ENCODE measurements at regions of chr12 and their contacts with region 1.

Region 1: DNA sequence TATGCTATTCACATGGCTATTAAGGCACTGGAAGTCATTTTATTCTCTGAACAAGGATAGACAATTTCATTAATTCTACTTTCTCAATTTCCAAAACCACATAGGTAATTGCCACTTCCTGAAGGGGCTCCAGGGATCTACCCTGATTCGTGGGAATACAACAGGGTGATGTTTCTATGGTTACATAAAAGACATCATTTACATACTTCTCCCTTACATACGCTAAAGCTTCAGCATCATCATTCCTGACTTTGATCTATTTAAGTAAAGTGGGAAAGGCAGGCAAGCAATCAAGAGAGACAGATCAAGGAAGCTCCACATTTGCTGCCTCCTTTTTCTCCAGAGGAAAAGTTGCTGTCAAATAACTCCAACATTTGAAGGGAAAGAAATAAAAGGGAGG is 118.8 kb upstream of the SINHCAF start:
- DNase-seq: no peak
- H3K4me3 ChIP-seq: no peak overlapping the region
- H3K27ac ChIP-seq: no peak overlapping the region
- H3K4me1 ChIP-seq: no peaks in the 10 kb centered on the region
- H3K27me3 ChIP-seq: no peaks in the 10 kb centered on the region
- CTCF ChIP-seq: no peak

Region 2: DNA sequence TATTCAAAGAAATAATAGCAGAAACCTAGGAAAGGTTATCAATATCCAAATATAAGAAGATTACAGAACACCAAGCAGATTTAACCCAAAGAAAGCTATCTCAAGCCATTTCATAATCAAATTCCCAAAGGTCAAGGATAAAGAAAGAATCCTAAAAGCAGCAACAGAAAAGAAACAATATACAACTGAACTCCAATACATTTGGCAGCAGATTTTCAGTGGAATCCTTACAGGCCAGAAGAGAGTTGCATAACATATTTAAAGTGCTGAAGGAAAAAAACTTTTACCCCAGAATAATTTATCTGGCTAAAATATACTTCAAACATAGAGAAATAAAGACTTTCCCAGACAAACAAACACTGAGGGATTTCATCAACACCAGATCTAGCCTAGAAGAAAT is 91.9 kb after region 1 on chr12:
- CTCF ChIA-PET with region 1: no interaction called
- POLR2A ChIA-PET with region 1: no interaction called
- intact Hi-C with region 1: no loop called
- DNase-seq: no peak
- H3K4me3 ChIP-seq: no peak overlapping the region
- H3K27ac ChIP-seq: no peak overlapping the region
- H3K4me1 ChIP-seq: no peaks in the 10 kb centered on the region
- H3K27me3 ChIP-seq: no peaks in the 10 kb centered on the region
- CTCF ChIP-seq: no peak

Region 3: GRCh38 chr12:31618228-31619025 is 173.7 kb after region 1 on chr12:
- CTCF ChIA-PET with region 1: interaction called, 10 read pairs
- POLR2A ChIA-PET with region 1: no interaction called
- intact Hi-C with region 1: no loop called
- DNase-seq: no peak
- H3K4me3 ChIP-seq: no peak overlapping the region
- H3K27ac ChIP-seq: no peak overlapping the region
- H3K4me1 ChIP-seq: no peaks in the 10 kb centered on the region
- H3K27me3 ChIP-seq: no peaks in the 10 kb centered on the region
- CTCF ChIP-seq: no peak